Gastrocnemius medialis (tissue), 4 donors: ENCODE measurements at regions of chr1 and their contacts with region 1.

Region 1: GRCh38 chr1:212284744-212285684 is at the start of gene PPP2R5A:
- DNase-seq: peak; percentile 99
- ATAC-seq: peak; percentile 83 to 87
- H3K4me3 ChIP-seq: peak within 1 kb of the TSS; percentile 81 to 91 (median 88)
- H3K27ac ChIP-seq: peak within 1 kb of the TSS; percentile 91 to 99 (median 98)
- H3K4me1 ChIP-seq: peaks cover 22 to 30% of the 10 kb centered on the region in 2 donors
- H3K27me3 ChIP-seq: no peaks in the 10 kb centered on the region
- CTCF ChIP-seq: peak in 3 of 5 experiments; percentile 22 to 41 (median 29)
- POLR2A ChIP-seq: peak; percentile 92 to 94
- total RNA-seq, gene PPP2R5A: 33.3 to 50.5 (median 37.5) TPM

Region 2: DNA sequence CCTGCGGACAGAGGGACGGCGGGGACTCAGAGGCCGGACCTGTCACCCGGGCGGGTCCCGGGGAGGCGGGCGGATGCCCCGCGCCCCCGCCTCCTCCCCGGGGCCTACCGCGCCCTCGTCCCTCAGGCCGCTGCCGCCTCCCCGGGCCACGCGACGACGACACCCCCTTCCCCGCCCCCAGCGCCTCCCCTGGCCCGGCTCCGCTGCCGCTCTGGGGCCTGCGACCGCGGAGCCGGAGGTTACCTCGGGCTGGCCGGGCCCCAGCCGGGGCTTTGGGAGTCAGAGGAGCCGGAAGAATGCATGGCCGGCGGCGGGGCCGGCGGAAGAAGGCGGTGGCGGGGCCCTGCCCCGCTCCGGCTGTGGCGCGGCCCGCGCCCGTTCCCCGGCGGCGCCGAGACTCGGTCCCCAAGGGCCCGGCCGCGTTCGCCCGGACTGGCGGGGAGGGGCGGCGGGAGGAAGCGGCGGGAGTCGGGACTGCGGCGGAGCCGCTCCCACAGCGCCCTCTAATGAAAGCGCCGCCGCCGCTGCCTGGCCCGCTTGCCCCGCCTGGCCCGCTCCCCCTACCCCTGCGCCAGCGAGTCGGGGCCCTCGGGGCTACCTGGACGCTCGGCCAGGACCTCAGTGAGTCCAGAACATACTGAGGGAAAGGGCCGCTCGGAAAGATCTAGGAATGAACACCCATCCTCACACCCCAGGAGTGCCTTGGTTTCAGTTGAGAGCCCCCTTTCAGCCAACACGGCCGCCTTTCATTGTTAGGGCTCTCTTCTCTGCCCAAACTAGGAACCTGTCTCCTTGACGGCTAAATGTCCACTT is 454.5 kb before region 1 on chr1 and contains the start of gene LPGAT1:
- in situ Hi-C with region 1: no loop called
- intact Hi-C with region 1: loop called (anchors 10 kb)
- DNase-seq: peak; percentile 61 to 63
- ATAC-seq: peak; percentile 87 to 89
- H3K4me3 ChIP-seq: peak within 1 kb of the TSS; percentile 62 to 85 (median 68)
- H3K27ac ChIP-seq: peak within 1 kb of the TSS; percentile 74 to 92 (median 88)
- H3K4me1 ChIP-seq: peaks cover 13 to 17% of the 10 kb centered on the region in 2 donors
- H3K27me3 ChIP-seq: no peaks in the 10 kb centered on the region
- CTCF ChIP-seq: peak; percentile 51 to 87 (median 65)
- POLR2A ChIP-seq: peak; percentile 22 to 44
- total RNA-seq, gene LPGAT1: 11.2 to 51.4 (median 21.5) TPM

Region 3: DNA sequence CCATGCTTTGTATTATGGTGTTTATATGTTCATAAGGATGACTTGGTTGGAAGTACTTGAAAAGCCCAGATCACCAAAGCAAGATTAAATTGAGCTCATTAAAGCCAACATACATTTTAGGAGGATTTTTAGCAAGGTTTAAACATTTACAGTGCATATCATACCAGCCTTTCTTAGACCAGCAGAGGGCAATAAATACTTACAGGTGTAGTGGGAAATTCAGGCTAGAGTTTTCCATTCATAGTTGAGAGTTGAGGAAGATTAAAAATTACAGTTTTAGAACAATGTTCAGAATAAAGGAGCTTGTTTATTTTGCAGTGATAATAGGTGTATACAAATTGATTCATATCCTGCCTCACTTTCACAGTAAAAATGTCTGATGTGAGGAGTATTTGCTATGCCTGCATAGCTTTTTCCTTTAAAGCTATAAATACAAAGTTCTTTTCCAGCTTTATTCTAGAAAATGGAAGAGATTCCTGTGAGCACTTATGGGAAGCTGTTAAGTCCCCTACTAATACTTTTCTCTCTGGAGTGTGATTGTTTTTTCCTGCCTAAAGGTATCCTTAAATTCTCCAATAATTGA is 214.2 kb before region 1 on chr1:
- in situ Hi-C with region 1: loop called in 2 of 4 experiments (anchors 5 kb)
- intact Hi-C with region 1: loop called (anchors 1 kb)
- DNase-seq: no peak
- ATAC-seq: peak; percentile 51 to 64
- H3K4me3 ChIP-seq: no peak overlapping the region
- H3K27ac ChIP-seq: peak overlapping the region in 3 of 4 donors; percentile 9 to 40 (median 17)
- H3K4me1 ChIP-seq: peaks cover 10 to 22% of the 10 kb centered on the region in 2 donors
- H3K27me3 ChIP-seq: no peaks in the 10 kb centered on the region
- CTCF ChIP-seq: peak; percentile 72 to 96 (median 84)
- POLR2A ChIP-seq: no peak

Region 4: GRCh38 chr1:212118167-212118871 is 166.7 kb before region 1 on chr1:
- in situ Hi-C with region 1: no loop called
- intact Hi-C with region 1: loop called (anchors 1 kb)
- DNase-seq: no peak
- ATAC-seq: no peak
- H3K4me3 ChIP-seq: no peak overlapping the region
- H3K27ac ChIP-seq: peak overlapping the region; percentile 84 to 94 (median 88)
- H3K4me1 ChIP-seq: peaks cover 30 to 38% of the 10 kb centered on the region in 2 donors
- H3K27me3 ChIP-seq: no peaks in the 10 kb centered on the region
- CTCF ChIP-seq: no peak
- POLR2A ChIP-seq: no peak

Region 5: GRCh38 chr1:212234431-212235395 is 50.3 kb before region 1 on chr1:
- in situ Hi-C with region 1: no loop called
- intact Hi-C with region 1: loop called (anchors 2 kb)
- DNase-seq: peak; percentile 74 to 82
- ATAC-seq: peak; percentile 96 to 97
- H3K4me3 ChIP-seq: no peak overlapping the region
- H3K27ac ChIP-seq: peak overlapping the region; percentile 80 to 90 (median 87)
- H3K4me1 ChIP-seq: peaks cover 35 to 51% of the 10 kb centered on the region in 2 donors
- H3K27me3 ChIP-seq: no peaks in the 10 kb centered on the region
- CTCF ChIP-seq: no peak
- POLR2A ChIP-seq: no peak

Region 6: GRCh38 chr1:212302745-212303383 is 17.9 kb after region 1 on chr1:
- in situ Hi-C with region 1: no loop called
- intact Hi-C with region 1: no loop called
- DNase-seq: no peak
- ATAC-seq: no peak
- H3K4me3 ChIP-seq: no peak overlapping the region
- H3K27ac ChIP-seq: peak overlapping the region in 1 of 4 donors; percentile 14
- H3K4me1 ChIP-seq: peaks cover 33 to 36% of the 10 kb centered on the region in 2 donors
- H3K27me3 ChIP-seq: no peaks in the 10 kb centered on the region
- CTCF ChIP-seq: no peak
- POLR2A ChIP-seq: no peak

Region 7: GRCh38 chr1:212608209-212608955 is 323.4 kb after region 1 on chr1 and contains the start of gene ATF3:
- in situ Hi-C with region 1: no loop called
- intact Hi-C with region 1: loop called (anchors 1 kb)
- DNase-seq: peak; percentile 100
- ATAC-seq: peak; percentile 81 to 93
- H3K4me3 ChIP-seq: peak within 1 kb of the TSS; percentile 76 to 92 (median 80)
- H3K27ac ChIP-seq: peak within 1 kb of the TSS; percentile 90 to 95 (median 93)
- H3K4me1 ChIP-seq: peaks cover 14 to 22% of the 10 kb centered on the region in 2 donors
- H3K27me3 ChIP-seq: peaks cover 21 to 39% (median 31%) of the 10 kb centered on the region in 3 donors
- CTCF ChIP-seq: no peak
- POLR2A ChIP-seq: peak; percentile 99
- total RNA-seq, gene ATF3: 1.9 to 7.4 (median 7.2) TPM